ENCODE measurements at regions of chr21 and their contacts with region 1.

Region 1: DNA sequence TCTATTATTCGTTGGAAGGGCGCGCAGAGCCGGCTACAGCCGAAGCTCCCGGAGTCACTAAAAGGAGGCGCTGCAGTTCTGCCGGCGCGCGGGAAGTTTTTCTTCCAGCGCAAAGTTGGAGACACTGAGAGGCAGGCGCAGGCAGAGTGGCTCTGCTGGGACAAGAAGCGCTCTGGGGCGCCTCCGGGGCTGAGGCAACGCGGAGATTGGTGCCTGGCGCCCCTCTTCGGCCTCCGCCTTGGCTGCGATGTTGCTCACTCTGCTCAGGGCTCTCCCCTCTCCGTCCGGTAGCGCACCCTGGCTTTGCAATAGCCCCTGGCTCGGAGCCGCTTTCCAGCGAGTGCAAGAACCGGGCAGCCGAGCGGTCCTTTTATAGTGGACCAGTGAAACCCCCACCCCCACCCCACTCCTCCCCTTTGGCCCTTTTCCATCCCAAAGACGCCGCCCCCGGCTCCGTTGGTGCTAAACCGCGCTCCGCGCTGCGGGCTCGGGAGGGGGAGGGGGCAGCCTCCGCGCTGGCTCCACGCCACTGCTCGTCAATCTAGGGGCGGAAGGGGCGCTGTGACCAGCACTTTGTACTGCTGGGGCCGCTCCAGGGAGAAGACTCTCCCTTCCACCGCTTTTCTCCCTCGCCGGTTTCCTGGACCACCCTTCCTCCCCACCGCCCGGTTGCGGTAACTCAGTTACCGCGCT is at the start of gene ADAMTS1:
- DNase-seq: peak; percentile 68
- H3K4me3 ChIP-seq: peak within 1 kb of the TSS; percentile 86
- CTCF ChIP-seq: peak; percentile 29

Region 2: DNA sequence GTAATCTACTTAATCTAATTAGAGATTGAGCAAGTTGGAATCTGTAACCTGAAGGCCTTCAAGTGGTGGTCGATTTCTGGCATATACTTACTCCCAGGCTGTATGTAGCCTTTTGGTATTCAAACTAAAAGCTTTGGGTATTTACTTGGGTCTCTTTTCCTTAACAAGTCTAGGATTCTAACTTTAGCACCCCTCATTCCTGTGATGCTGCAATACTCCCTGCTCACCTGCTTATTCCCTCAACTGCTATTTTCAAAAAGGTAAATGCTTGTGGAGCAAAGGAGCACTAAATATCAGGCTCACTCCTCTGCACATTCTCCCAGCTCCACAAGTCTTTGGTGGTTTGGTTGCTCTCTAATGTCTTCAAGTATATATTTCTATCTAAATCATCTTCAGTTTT is 204.2 kb before region 1 on chr21:
- in situ Hi-C with region 1: no loop called
- DNase-seq: no peak
- H3K4me3 ChIP-seq: no peak overlapping the region
- CTCF ChIP-seq: no peak

Region 3: GRCh38 chr21:26756491-26757159 is 88.6 kb before region 1 on chr21:
- in situ Hi-C with region 1: no loop called
- DNase-seq: peak; percentile 49
- H3K4me3 ChIP-seq: no peak overlapping the region
- CTCF ChIP-seq: no peak

Region 4: GRCh38 chr21:26888256-26888655 is 43.0 kb after region 1 on chr21:
- in situ Hi-C with region 1: no loop called
- DNase-seq: peak; percentile 31
- H3K4me3 ChIP-seq: no peak overlapping the region
- CTCF ChIP-seq: no peak

Region 5: DNA sequence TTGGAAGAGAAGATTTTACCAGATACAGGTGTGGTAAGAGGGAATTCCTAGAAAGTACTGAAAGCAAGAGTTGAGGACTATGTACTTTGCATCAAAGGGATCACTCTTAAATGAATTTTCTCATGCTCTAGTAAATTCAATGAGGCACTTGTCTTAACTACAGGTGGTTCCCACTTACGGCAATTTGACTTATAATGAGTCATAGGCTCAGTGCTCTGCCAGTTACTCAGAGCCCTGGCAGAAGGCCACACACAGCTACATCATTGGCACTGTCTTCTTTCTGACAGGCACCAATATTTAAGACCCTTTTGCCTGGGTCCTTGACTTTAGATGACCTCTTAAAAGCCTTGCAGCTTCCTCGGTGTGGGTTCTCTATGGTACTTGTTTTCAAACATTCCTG is 137.6 kb after region 1 on chr21:
- in situ Hi-C with region 1: no loop called
- DNase-seq: no peak
- H3K4me3 ChIP-seq: no peak overlapping the region
- CTCF ChIP-seq: no peak

Region 6: GRCh38 chr21:27693376-27693775 is 848.2 kb after region 1 on chr21:
- in situ Hi-C with region 1: loop called (anchors 25 kb)
- DNase-seq: no peak
- H3K4me3 ChIP-seq: no peak overlapping the region
- CTCF ChIP-seq: no peak

Region 7: DNA sequence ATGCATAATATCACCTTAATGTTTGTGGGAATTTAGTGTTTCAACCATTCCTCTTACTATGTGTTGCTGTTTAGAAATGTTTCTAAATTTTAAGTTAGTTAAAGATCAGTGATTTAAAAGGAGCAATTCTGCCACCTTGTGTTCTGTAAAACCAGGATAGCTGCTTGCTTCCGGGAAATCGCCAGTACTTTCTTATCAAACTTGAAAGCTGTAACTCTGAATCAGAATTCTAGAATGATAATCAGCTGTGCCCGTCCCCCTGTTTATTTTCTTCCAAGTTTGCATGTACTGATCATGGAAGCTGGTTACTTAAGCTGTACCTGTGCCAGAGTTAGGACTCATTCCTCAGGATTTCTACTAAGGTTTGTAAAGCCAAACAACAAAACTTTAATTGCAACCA is 1491.1 kb after region 1 on chr21:
- in situ Hi-C with region 1: loop called (anchors 5 kb)
- DNase-seq: peak; percentile 63
- H3K4me3 ChIP-seq: no peak overlapping the region
- CTCF ChIP-seq: peak; percentile 54

Region 8: DNA sequence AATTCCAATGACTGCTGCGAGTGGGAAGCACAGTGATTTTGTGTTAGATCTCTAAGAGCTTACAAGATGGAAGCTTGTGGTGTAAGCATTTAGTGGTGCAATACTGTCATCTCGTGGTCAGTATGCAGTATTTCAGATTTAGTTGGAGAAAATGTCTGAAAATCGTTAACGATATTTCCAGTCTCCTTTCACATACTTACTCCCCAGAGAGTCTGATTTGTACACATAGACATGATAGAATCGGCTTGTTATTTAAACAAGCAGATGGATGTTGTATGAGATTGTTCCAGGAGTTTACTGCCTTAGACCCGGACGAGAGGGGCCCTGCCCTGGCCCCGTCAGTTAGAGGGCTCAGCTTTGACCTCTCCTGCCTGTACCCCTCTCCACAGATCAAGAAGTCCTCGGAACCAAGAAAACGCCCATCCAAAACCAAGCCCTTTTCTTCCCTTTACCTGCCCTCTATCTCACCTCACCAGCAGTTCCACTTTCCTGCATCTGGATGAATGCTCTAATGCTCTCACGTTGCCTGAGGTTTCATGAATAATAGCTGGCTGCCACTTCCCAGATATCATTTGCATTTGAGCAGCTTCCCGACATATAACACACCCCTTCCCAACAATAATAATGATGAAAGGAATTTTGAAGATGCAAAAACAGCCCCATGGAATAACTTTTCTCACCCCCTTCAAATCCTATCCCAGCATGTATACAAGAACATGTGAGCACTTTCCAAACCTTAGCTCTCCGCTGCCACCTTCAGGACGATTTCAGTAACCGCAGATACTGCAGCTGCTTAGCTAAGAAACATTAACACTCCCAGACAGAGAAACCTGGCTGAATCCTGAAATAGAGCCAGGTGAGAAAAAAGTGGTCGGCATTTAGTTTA is 1900.2 kb after region 1 on chr21:
- in situ Hi-C with region 1: loop called (anchors 25 kb)
- DNase-seq: peak; percentile 88
- H3K4me3 ChIP-seq: peak overlapping the region; percentile 35
- CTCF ChIP-seq: peak; percentile 82